ENCODE measurements at regions of chr19 and their contacts with region 1.

Region 1: DNA sequence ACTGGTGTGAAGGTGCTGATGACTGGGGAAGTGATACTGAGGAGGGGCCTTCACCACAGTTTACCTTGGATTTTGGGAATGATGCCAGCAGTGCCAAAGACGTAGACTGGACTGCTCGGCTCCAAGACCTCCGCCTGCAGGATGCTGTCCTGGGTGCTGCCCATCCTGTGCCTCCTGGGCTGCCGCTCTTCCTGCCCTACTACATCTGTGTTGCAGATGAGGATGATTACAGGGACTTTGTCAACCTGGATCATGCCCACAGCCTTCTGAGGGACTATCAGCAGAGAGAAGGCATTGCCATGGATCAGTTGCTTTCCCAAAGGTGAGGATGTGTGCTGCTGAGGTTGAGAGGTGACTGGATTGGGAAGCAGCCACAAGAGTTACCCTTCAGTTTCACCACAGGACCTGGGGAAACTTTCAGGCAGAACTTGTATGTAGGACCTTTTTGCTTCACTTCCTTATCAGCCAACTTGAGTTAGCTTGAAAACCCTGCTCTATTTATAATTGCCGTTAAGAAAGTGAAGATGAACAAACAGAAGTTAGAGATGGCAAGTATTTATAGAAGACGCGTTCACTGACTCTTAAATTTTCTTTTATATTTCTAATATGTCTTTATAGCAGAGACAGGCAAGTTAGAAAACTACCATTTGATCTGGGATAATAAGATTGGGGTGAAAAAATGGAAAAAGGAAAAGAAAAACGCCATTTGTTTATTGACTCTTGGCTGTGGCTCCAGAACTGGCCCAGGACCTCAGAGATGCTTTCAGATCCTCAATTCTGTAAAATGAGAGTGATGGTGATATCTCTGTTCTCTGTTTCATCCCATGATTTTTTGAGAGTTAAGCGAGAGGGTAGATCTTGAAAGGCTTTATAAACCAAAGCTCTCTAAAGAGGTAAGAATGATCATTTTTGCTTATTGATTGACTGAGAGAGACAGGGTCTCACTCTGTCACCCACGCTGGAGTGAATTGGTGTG is 5.3 kb downstream of the PDCD2L start:
- DNase-seq: no peak
- ATAC-seq: no peak
- H3K4me3 ChIP-seq: no peak overlapping the region
- H3K4me3 Mint-ChIP-seq: no peak overlapping the region
- H3K27ac ChIP-seq: no peak overlapping the region
- H3K27ac Mint-ChIP-seq: no peak overlapping the region
- H3K4me1 ChIP-seq: peaks cover 2 to 17% of the 10 kb centered on the region in 2 experiments
- H3K4me1 Mint-ChIP-seq: peaks cover 19 to 25% (median 21%) of the 10 kb centered on the region in 3 donors
- H3K27me3 ChIP-seq: no peaks in the 10 kb centered on the region
- H3K27me3 Mint-ChIP-seq: no peaks in the 10 kb centered on the region

Region 2: DNA sequence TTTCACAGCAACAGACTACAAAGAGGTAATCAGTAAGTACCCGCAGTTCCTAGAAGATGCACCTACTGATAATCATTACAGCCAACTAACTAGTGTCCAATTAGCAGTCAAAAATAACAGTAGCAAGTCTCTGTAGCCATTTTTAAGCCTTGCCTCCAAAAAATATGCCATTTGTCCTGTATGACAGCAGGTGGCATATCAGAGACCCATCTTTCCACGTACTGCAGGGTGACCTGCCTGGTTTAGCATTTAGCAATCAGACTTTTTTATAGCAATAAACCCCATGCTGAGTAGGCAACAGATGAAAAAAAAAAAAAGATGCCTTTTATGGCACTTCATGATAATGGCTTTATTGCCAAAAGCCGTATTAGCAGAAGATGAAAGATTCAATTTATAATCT is 392.5 kb before region 1 on chr19:
- CTCF ChIA-PET with region 1: no interaction called
- POLR2A ChIA-PET with region 1: no interaction called
- DNase-seq: peak in 1 of 35 experiments; percentile 9
- ATAC-seq: no peak
- H3K4me3 ChIP-seq: no peak overlapping the region
- H3K4me3 Mint-ChIP-seq: no peak overlapping the region
- H3K27ac ChIP-seq: no peak overlapping the region
- H3K27ac Mint-ChIP-seq: no peak overlapping the region
- H3K4me1 ChIP-seq: no peaks in the 10 kb centered on the region
- H3K4me1 Mint-ChIP-seq: no peaks in the 10 kb centered on the region
- H3K27me3 ChIP-seq: peaks cover 5 to 8% of the 10 kb centered on the region in 2 experiments
- H3K27me3 Mint-ChIP-seq: peaks cover 42 to 53% of the 10 kb centered on the region in 2 donors

Region 3: DNA sequence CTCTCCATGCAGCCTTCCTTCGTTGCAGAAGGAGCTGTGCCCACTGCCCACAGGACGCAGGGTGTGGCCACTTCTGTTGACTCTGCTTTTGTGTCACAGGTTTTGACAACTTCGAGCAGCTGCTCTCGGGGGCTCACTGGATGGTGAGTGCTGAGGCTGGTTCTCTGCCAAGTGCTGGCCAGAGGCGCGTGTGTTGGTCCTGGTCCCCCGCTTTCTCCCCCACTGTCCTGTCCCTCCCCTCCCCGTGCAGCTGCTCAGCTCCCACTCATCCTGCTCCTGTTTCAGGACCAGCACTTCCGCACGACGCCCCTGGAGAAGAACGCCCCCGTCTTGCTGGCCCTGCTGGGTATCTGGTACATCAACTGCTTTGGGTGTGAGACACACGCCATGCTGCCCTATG is 15.8 kb before region 1 on chr19:
- CTCF ChIA-PET with region 1: no interaction called
- POLR2A ChIA-PET with region 1: interaction called in 1 of 2 experiments, 14 read pairs
- DNase-seq: no peak
- ATAC-seq: no peak
- H3K4me3 ChIP-seq: no peak overlapping the region
- H3K4me3 Mint-ChIP-seq: no peak overlapping the region
- H3K27ac ChIP-seq: no peak overlapping the region
- H3K27ac Mint-ChIP-seq: no peak overlapping the region
- H3K4me1 ChIP-seq: no peaks in the 10 kb centered on the region
- H3K4me1 Mint-ChIP-seq: no peaks in the 10 kb centered on the region
- H3K27me3 ChIP-seq: no peaks in the 10 kb centered on the region
- H3K27me3 Mint-ChIP-seq: no peaks in the 10 kb centered on the region

Measured in T-cell (primary cell).